Endothelial cell of umbilical vein (primary cell): ENCODE measurements at regions of chr11 and their contacts with region 1.

Region 1: DNA sequence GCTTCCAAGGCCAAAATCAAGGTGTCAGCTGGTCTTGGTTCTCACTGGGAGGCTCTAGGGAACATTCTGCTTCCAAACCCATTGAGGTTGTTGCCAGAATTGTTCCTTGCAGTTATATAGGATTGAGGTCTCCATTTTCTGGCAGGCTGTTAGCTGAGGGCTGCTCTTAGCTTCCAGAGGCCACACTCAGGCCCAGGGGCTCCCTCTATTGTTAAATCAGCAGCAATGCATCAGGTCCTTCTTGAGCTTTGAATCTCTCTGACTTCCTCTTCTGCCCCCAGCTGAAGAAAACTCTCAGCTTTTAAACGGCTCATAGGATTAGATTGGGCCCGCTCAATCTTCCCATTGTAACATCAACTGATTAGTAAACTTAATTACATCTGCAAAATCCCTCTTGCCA is 39.3 kb upstream of the BSX start:
- DNase-seq: peak; percentile 32
- H3K4me3 ChIP-seq: no peak overlapping the region
- H3K27ac ChIP-seq: no peak overlapping the region
- H3K4me1 ChIP-seq: no peaks in the 10 kb centered on the region
- H3K27me3 ChIP-seq: peaks cover 3 to 16% of the 10 kb centered on the region in 2 experiments
- CTCF ChIP-seq: peak; percentile 57 to 76
- POLR2A ChIP-seq: no peak

Region 2: GRCh38 chr11:122253589-122254231 is 767.3 kb before region 1 on chr11:
- CTCF ChIA-PET with region 1: no interaction called
- POLR2A ChIA-PET with region 1: no interaction called
- dilution Hi-C with region 1: no loop called
- intact Hi-C with region 1: no loop called
- DNase-seq: no peak
- H3K4me3 ChIP-seq: no peak overlapping the region
- H3K27ac ChIP-seq: no peak overlapping the region
- H3K4me1 ChIP-seq: no peaks in the 10 kb centered on the region
- H3K27me3 ChIP-seq: no peaks in the 10 kb centered on the region
- CTCF ChIP-seq: no peak
- POLR2A ChIP-seq: no peak

Region 3: DNA sequence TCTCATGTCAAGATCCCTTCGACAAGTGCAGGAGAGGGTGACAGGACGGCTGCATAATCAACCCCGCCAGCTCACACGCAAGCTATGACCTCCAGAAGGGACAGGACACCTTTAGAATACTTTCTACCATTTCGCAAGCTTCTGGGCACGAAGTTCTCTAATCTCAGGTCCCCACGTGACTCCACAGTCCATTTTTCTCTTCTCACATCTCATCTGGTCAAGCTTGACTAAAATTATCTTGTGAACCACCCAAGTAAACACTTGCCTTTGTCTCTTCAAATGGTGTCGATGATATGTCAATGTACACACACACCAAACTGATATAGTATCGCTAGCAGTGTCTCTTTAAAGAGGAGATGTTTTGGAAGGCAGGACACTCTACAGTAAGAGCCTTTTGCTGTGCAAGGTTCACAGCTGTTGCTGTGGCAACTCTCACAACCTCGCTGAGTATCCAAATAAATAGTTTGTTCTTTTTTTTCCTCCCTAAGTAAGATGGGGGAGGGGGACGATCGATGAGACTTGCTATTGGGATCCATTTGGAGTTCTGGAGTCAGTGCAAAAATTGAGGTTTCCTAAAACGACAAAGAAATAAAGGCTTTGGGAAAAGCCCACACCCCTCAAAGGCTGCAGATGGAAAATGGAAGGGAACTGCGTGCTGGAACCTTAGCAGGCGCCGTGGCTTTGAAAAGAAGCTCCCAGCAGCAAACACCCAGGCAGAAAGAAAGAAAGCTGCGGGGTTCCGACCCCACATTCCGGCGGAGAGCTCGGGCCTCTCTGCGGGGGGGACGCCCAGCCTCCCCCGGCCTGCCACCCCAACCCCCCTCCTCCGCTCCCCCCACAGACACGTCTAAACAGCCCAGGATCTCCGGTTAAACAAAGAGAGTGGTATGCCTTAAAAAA is 580.8 kb before region 1 on chr11:
- CTCF ChIA-PET with region 1: no interaction called
- POLR2A ChIA-PET with region 1: no interaction called
- dilution Hi-C with region 1: no loop called
- intact Hi-C with region 1: no loop called
- DNase-seq: peak; percentile 10
- H3K4me3 ChIP-seq: peak overlapping the region in 2 of 3 experiments; percentile 27 to 28
- H3K27ac ChIP-seq: no peak overlapping the region
- H3K4me1 ChIP-seq: peaks cover 4% of the 10 kb centered on the region
- H3K27me3 ChIP-seq: peaks cover 12 to 27% of the 10 kb centered on the region in 2 experiments
- CTCF ChIP-seq: no peak
- POLR2A ChIP-seq: no peak

Region 4: DNA sequence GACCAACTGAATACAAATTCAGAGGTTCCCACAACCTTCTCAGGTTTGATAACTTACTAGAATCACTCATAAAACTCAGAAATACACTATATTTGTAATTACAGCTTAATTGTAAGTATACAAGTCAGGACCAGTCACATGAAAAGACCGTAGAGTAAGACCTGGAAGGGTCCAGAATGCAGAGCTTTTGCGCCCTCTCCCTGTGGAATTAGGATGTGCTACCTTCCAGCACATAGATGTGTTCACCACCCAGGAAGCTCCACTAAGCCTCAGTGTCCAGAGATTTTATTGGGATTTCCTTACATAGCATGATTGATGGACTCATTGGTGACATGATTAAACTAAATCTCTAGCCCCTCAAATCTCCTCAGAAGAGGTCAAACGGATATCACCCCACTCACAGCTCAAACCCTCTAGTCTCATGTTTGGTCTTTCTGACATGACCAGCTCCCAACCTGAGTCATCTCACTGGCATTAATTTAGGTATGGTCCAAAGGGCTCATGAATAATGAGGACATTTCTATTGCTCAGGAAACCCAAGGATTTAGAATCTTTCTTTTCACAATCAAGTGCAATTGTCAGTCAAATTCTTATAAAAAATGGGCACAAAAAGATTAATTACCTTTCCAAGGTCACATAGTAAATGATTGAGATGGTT is 442.7 kb before region 1 on chr11:
- CTCF ChIA-PET with region 1: interaction called, 8 read pairs
- POLR2A ChIA-PET with region 1: no interaction called
- dilution Hi-C with region 1: no loop called
- intact Hi-C with region 1: loop called (anchors 2 kb)
- DNase-seq: no peak
- H3K4me3 ChIP-seq: no peak overlapping the region
- H3K27ac ChIP-seq: no peak overlapping the region
- H3K4me1 ChIP-seq: no peaks in the 10 kb centered on the region
- H3K27me3 ChIP-seq: no peaks in the 10 kb centered on the region
- CTCF ChIP-seq: no peak
- POLR2A ChIP-seq: no peak

Region 5: GRCh38 chr11:122853971-122854446 is 167.0 kb before region 1 on chr11:
- CTCF ChIA-PET with region 1: interaction called, 28 read pairs
- POLR2A ChIA-PET with region 1: no interaction called
- dilution Hi-C with region 1: no loop called
- intact Hi-C with region 1: no loop called
- DNase-seq: peak; percentile 78
- H3K4me3 ChIP-seq: no peak overlapping the region
- H3K27ac ChIP-seq: no peak overlapping the region
- H3K4me1 ChIP-seq: no peaks in the 10 kb centered on the region
- H3K27me3 ChIP-seq: peaks cover 0 to 3% of the 10 kb centered on the region in 2 experiments
- CTCF ChIP-seq: peak; percentile 47 to 63
- POLR2A ChIP-seq: no peak

Region 6: GRCh38 chr11:122882857-122883645 is 137.9 kb before region 1 on chr11:
- CTCF ChIA-PET with region 1: interaction called, 32 read pairs
- POLR2A ChIA-PET with region 1: no interaction called
- dilution Hi-C with region 1: no loop called
- intact Hi-C with region 1: no loop called
- DNase-seq: peak; percentile 50
- H3K4me3 ChIP-seq: peak overlapping the region; percentile 58 to 72 (median 71)
- H3K27ac ChIP-seq: peak overlapping the region; percentile 66
- H3K4me1 ChIP-seq: peaks cover 8% of the 10 kb centered on the region
- H3K27me3 ChIP-seq: peaks cover 2 to 4% of the 10 kb centered on the region in 2 experiments
- CTCF ChIP-seq: no peak
- POLR2A ChIP-seq: peak; percentile 53

Region 7: GRCh38 chr11:122951211-122951610 is 69.8 kb before region 1 on chr11:
- CTCF ChIA-PET with region 1: interaction called, 11 read pairs
- POLR2A ChIA-PET with region 1: no interaction called
- dilution Hi-C with region 1: no loop called
- intact Hi-C with region 1: no loop called
- DNase-seq: no peak
- H3K4me3 ChIP-seq: no peak overlapping the region
- H3K27ac ChIP-seq: no peak overlapping the region
- H3K4me1 ChIP-seq: no peaks in the 10 kb centered on the region
- H3K27me3 ChIP-seq: no peaks in the 10 kb centered on the region
- CTCF ChIP-seq: no peak
- POLR2A ChIP-seq: no peak

Region 8: DNA sequence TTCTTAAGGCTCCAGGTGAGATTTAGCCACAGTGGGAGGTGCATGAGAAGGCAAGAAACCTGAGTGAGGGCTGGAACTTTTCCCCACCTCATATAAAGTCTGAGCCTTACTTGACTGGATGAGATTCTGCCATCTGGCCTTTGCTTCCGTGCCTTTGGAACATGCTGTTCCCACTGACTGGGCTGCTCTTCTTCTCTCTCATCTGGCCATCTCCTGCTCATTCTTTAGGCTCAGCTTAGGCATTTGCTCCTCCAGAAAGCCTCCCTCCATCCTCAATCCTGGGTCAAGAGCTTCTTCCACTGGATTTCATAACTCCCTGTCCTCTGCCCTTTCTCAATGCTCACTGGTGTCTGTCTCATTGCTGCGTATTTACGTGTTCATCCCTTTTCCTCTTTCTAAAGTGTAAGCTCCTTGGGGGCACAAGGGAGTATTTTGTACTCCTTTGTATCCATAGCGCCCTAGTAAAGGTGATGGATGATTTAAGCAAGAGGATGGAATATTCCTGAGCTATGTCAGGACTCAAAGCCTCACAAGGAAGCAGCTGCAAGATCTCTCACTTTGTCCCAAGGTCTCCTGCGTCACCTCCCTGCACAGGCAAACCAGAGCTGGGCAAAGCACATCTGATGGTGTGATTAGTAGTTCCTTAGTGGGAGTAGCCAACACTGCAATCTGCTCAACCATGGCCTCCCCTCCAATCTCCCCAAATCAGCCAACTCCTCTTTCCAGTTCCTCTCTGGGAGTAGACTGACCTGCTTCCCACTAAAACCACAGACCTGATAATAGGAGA is 25.7 kb after region 1 on chr11:
- CTCF ChIA-PET with region 1: interaction called, 34 read pairs
- POLR2A ChIA-PET with region 1: no interaction called
- dilution Hi-C with region 1: no loop called
- intact Hi-C with region 1: no loop called
- DNase-seq: no peak
- H3K4me3 ChIP-seq: no peak overlapping the region
- H3K27ac ChIP-seq: no peak overlapping the region
- H3K4me1 ChIP-seq: no peaks in the 10 kb centered on the region
- H3K27me3 ChIP-seq: peaks cover 0 to 4% of the 10 kb centered on the region in 2 experiments
- CTCF ChIP-seq: no peak
- POLR2A ChIP-seq: no peak